Activated CD8-positive, alpha-beta T cell treated with anti-CD3 and anti-CD28 coated beads for 36 hours (primary cell): ENCODE measurements at regions of chr22 and their contacts with region 1.

Region 1: GRCh38 chr22:39319270-39320022 is at the start of gene RPL3:
- DNase-seq: peak; percentile 96
- ATAC-seq: peak; percentile 83
- H3K4me3 Mint-ChIP-seq: peak within 1 kb of the TSS; percentile 99
- H3K27ac Mint-ChIP-seq: peak within 1 kb of the TSS; percentile 100
- H3K4me1 Mint-ChIP-seq: peaks cover 31% of the 10 kb centered on the region
- H3K27me3 Mint-ChIP-seq: no peaks in the 10 kb centered on the region
- CTCF ChIP-seq: no peak
- total RNA-seq, gene RPL3: 3,563 to 3,599 TPM

Region 2: GRCh38 chr22:39106326-39106725 is 213.1 kb before region 1 on chr22:
- CTCF ChIA-PET with region 1: no interaction called
- POLR2A ChIA-PET with region 1: no interaction called
- intact Hi-C with region 1: no loop called
- DNase-seq: no peak
- ATAC-seq: no peak
- H3K4me3 Mint-ChIP-seq: no peak overlapping the region
- H3K27ac Mint-ChIP-seq: no peak overlapping the region
- H3K4me1 Mint-ChIP-seq: peaks cover 9% of the 10 kb centered on the region
- H3K27me3 Mint-ChIP-seq: no peaks in the 10 kb centered on the region
- CTCF ChIP-seq: no peak

Region 3: GRCh38 chr22:39170825-39171622 is 148.4 kb before region 1 on chr22:
- CTCF ChIA-PET with region 1: interaction called, 48 read pairs
- POLR2A ChIA-PET with region 1: interaction called, 40 read pairs
- intact Hi-C with region 1: no loop called
- DNase-seq: peak; percentile 87
- ATAC-seq: peak; percentile 79
- H3K4me3 Mint-ChIP-seq: peak overlapping the region; percentile 49
- H3K27ac Mint-ChIP-seq: peak overlapping the region; percentile 70
- H3K4me1 Mint-ChIP-seq: peaks cover 43% of the 10 kb centered on the region
- H3K27me3 Mint-ChIP-seq: no peaks in the 10 kb centered on the region
- CTCF ChIP-seq: peak; percentile 99

Region 4: DNA sequence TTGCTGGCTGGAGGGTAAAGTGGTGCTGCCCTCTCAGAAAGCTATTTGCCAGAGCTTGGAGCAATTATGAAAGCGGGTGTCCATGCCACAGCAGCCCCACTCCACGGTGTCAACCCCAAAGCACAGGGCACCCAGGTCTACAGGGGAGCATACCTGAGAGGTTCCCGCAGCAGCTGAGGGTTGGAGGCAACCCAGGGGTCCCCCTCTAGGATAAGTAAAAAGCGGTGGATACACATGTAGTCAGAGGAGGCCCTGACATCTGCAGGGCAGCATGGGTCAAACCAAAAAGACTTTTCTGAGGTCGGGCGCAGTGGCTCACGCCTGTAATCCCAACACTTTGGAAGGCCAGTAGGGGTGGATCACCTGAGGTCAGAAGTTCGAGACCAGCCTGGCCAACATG is 129.2 kb before region 1 on chr22:
- CTCF ChIA-PET with region 1: no interaction called
- POLR2A ChIA-PET with region 1: no interaction called
- intact Hi-C with region 1: no loop called
- DNase-seq: no peak
- ATAC-seq: no peak
- H3K4me3 Mint-ChIP-seq: no peak overlapping the region
- H3K27ac Mint-ChIP-seq: no peak overlapping the region
- H3K4me1 Mint-ChIP-seq: no peaks in the 10 kb centered on the region
- H3K27me3 Mint-ChIP-seq: no peaks in the 10 kb centered on the region
- CTCF ChIP-seq: no peak

Region 5: GRCh38 chr22:39306581-39307361 is 12.7 kb before region 1 on chr22:
- CTCF ChIA-PET with region 1: interaction called, 20 read pairs
- POLR2A ChIA-PET with region 1: interaction called, 101 read pairs
- intact Hi-C with region 1: no loop called
- DNase-seq: peak; percentile 77
- ATAC-seq: peak; percentile 34
- H3K4me3 Mint-ChIP-seq: no peak overlapping the region
- H3K27ac Mint-ChIP-seq: no peak overlapping the region
- H3K4me1 Mint-ChIP-seq: peaks cover 9% of the 10 kb centered on the region
- H3K27me3 Mint-ChIP-seq: no peaks in the 10 kb centered on the region
- CTCF ChIP-seq: peak; percentile 61

Region 6: DNA sequence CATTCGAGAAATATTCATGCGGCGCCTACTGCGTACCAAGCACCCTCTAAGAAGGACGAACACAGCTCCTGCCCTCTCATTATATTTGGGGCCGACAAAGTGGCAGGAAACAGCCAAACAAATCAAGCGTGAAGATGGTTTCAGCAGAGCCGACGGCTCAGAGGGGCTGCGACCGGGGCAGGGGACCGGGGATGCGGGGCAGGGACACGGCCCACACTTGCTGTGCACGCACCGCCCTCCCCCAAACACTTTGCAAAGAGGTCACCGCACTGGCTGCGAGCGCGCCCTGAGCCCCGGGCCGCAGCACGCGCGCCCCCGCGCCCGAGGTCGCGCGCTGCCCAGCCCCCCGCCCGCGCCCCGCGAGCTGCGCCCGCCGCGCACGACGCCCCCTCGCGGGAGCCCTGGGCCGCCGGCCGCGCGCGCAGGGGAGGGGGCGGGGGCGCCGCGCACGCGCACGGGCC is 30.1 kb after region 1 on chr22:
- CTCF ChIA-PET with region 1: interaction called, 3 read pairs
- POLR2A ChIA-PET with region 1: interaction called, 18 read pairs
- intact Hi-C with region 1: no loop called
- DNase-seq: peak; percentile 49
- ATAC-seq: peak; percentile 68
- H3K4me3 Mint-ChIP-seq: peak overlapping the region; percentile 82
- H3K27ac Mint-ChIP-seq: peak overlapping the region; percentile 76
- H3K4me1 Mint-ChIP-seq: peaks cover 11% of the 10 kb centered on the region
- H3K27me3 Mint-ChIP-seq: peaks cover 10% of the 10 kb centered on the region
- CTCF ChIP-seq: no peak

Region 7: GRCh38 chr22:39395936-39396796 is 76.7 kb after region 1 on chr22:
- CTCF ChIA-PET with region 1: no interaction called
- POLR2A ChIA-PET with region 1: interaction called, 13 read pairs
- intact Hi-C with region 1: no loop called
- DNase-seq: no peak
- ATAC-seq: no peak
- H3K4me3 Mint-ChIP-seq: no peak overlapping the region
- H3K27ac Mint-ChIP-seq: no peak overlapping the region
- H3K4me1 Mint-ChIP-seq: peaks cover 5% of the 10 kb centered on the region
- H3K27me3 Mint-ChIP-seq: no peaks in the 10 kb centered on the region
- CTCF ChIP-seq: no peak